Ascending aorta (tissue), 2 donors: ENCODE measurements at regions of chr9 and their contacts with region 1.

Region 1: DNA sequence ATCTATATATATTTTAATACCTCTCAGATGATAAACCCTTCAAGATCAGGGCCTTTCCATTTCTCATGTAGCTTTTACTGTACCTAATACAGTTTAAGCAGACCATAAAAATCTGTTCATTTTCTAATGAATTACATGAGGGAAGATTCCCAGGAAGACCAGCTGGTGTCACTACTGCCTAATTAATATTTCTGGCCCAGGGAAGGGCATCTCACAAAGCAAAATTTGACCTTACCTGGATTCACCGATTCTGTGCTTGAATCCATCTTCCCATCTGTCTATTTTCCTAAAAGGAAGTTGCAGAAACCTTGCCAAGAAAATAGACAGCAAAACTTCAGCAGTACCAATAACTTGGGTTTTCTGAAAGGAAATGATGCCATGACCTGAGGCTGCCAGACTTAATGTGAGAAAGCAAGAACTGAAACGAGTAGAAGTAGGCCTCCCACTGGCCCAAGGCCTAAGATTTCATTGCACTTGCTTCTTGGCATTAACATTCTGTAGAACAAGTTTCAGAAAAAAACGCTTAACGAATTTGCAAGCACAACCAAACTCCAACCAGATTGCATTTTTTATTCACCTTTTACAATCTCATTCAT is 83.0 kb upstream of the GLIS3 start:
- DNase-seq: no peak
- H3K4me3 ChIP-seq: no peak overlapping the region
- H3K27ac ChIP-seq: no peak overlapping the region
- H3K4me1 ChIP-seq: no peaks in the 10 kb centered on the region
- H3K27me3 ChIP-seq: no peaks in the 10 kb centered on the region
- CTCF ChIP-seq: peak; percentile 21 to 50 (median 32)

Region 2: GRCh38 chr9:4639420-4639819 is 256.6 kb after region 1 on chr9:
- intact Hi-C with region 1: loop called (anchors 2 kb)
- DNase-seq: no peak
- H3K4me3 ChIP-seq: no peak overlapping the region
- H3K27ac ChIP-seq: no peak overlapping the region
- H3K4me1 ChIP-seq: no peaks in the 10 kb centered on the region
- H3K27me3 ChIP-seq: no peaks in the 10 kb centered on the region
- CTCF ChIP-seq: no peak

Region 3: DNA sequence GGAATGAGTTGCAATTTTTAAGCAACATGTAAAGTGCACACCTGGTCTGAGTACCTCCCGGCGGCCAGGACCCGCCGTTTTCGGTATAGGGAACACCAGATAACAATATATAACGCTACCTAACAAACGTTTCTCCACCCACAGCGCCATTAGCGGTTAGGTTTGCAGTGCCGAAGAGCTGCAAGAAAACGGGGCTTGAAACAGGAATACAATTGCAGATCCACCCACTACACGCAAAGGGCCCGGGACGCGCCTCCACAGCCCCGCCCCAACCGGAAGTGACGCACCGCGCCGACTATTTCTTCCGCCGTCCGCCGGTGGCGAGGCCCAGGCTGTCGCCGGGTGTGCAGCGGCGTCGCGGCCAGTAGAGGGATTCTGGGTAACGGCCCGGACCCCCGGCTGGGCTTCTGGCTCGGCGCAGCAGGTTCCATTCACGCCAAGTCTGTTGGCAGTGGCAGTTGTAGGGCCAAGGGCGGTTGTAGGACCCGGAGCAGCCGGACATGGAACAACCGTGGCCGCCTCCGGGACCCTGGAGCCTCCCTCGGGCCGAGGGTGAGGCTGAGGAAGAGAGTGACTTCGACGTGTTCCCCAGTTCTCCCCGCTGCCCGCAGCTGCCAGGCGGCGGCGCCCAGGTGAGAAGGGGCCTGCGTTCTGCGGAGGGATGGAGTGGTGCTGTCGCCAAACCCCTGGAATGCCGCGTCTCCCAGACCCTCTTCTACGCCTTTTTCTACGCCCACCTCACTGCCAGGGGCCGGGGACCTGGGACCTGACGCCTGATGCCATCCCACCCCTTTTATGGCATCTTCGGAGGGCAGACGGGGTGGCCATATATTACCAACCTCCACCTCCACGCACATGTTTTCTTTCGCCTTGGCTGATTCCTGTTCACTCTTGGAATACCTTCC is 296.7 kb after region 1 on chr9 and contains the start of gene CDC37L1:
- intact Hi-C with region 1: no loop called
- DNase-seq: peak; percentile 87 to 99
- H3K4me3 ChIP-seq: peak within 1 kb of the TSS; percentile 79 to 91
- H3K27ac ChIP-seq: peak within 1 kb of the TSS; percentile 97 to 98
- H3K4me1 ChIP-seq: peaks cover 0 to 16% of the 10 kb centered on the region in 2 donors
- H3K27me3 ChIP-seq: no peaks in the 10 kb centered on the region
- CTCF ChIP-seq: peak; percentile 61 to 76 (median 76)
- total RNA-seq, gene CDC37L1: 17.2 TPM